Heart left ventricle (tissue), 16 donors: ENCODE measurements at regions of chr22 and their contacts with region 1.

Region 1: DNA sequence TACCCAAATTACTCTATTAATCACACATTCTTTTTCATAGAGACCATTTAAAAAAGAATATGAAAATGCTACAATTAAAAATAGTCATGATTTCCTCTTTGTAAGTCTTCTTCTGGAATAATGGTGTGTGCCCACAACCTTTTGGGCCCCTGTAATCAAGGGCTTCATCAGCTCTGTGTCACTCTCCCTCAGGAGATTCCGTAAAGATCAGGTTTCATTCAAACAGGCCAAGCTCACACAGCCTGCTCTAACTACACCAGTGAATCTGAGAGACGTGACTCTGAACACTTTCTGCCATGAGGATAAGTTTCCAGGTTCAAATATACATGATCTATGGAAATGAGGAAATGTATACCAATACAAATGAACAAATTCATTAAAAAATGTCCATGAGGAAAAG is 9.5 kb downstream of the DRICH1 start:
- DNase-seq: no peak
- ATAC-seq: no peak
- H3K4me3 ChIP-seq: no peak overlapping the region
- H3K27ac ChIP-seq: no peak overlapping the region
- H3K4me1 ChIP-seq: no peaks in the 10 kb centered on the region
- H3K27me3 ChIP-seq: no peaks in the 10 kb centered on the region
- CTCF ChIP-seq: no peak
- POLR2A ChIP-seq: no peak

Region 2: GRCh38 chr22:23685205-23685784 is 62.7 kb after region 1 on chr22:
- intact Hi-C with region 1: loop called in 1 of 10 experiments (anchors 10 kb)
- DNase-seq: peak in 1 of 5 donors; percentile 44
- ATAC-seq: peak in 3 of 4 donors; percentile 64 to 71 (median 66)
- H3K4me3 ChIP-seq: no peak overlapping the region
- H3K27ac ChIP-seq: peak overlapping the region in 1 of 12 donors; percentile 69
- H3K4me1 ChIP-seq: peaks cover 0 to 33% (median 21%) of the 10 kb centered on the region in 12 donors
- H3K27me3 ChIP-seq: no peaks in the 10 kb centered on the region
- CTCF ChIP-seq: no peak
- POLR2A ChIP-seq: no peak

Region 3: GRCh38 chr22:23767673-23768548 is 145.3 kb after region 1 on chr22 and contains the start of gene CHCHD10:
- intact Hi-C with region 1: loop called in 4 of 10 experiments (anchors 5 to 10 kb)
- DNase-seq: peak; percentile 88 to 92 (median 90)
- ATAC-seq: peak; percentile 73 to 87 (median 82)
- H3K4me3 ChIP-seq: peak within 1 kb of the TSS; percentile 30 to 91 (median 66)
- H3K27ac ChIP-seq: peak within 1 kb of the TSS; percentile 82 to 97 (median 90)
- H3K4me1 ChIP-seq: peaks cover 0 to 70% (median 43%) of the 10 kb centered on the region in 12 donors
- H3K27me3 ChIP-seq: no peaks in the 10 kb centered on the region
- CTCF ChIP-seq: peak; percentile 73 to 92 (median 86)
- POLR2A ChIP-seq: peak; percentile 92 to 97
- total RNA-seq, gene CHCHD10: 374 to 1,458 (median 944) TPM

Region 4: DNA sequence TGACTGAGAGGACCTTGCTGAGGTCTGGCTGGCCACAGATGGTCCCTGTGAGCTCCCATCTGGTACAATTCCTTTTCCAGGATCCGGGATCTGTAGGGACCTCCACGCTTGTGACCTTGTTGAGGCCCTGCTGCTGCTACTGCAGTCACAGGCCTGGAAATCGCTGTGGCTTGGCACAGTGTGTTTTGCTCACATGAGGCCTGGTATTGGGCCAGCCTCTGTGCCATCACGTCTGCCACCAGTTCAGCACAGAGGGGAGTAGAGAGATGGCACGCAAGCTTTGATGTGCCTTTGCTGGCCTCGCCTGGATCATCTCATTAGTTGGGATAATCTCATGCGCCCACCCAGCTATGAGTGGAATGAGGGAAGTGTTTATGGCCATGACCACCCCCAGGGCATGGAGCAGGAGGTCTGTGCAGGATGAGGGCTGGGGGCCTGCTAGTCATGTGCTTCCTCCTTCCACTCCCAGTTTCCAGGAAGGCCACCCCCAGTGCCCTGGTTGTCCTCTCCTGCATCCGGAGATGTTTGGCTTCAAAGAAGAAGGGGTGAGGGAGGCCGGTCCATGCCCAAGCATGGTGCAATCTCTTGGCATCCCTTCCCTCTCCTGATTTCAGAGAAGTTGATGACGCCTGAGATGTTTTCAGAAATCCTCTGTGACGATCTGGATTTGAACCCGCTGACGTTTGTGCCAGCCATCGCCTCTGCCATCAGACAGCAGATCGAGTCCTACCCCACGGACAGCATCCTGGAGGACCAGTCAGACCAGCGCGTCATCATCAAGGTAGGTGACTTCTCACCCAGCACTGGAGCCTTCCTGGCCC is 193.7 kb after region 1 on chr22:
- intact Hi-C with region 1: no loop called
- DNase-seq: peak in 4 of 5 donors; percentile 59 to 84 (median 72)
- ATAC-seq: peak; percentile 90 to 98 (median 92)
- H3K4me3 ChIP-seq: no peak overlapping the region
- H3K27ac ChIP-seq: peak overlapping the region; percentile 43 to 93 (median 78)
- H3K4me1 ChIP-seq: peaks cover 0 to 24% (median 8%) of the 10 kb centered on the region in 12 donors
- H3K27me3 ChIP-seq: no peaks in the 10 kb centered on the region
- CTCF ChIP-seq: no peak
- POLR2A ChIP-seq: no peak

Region 5: DNA sequence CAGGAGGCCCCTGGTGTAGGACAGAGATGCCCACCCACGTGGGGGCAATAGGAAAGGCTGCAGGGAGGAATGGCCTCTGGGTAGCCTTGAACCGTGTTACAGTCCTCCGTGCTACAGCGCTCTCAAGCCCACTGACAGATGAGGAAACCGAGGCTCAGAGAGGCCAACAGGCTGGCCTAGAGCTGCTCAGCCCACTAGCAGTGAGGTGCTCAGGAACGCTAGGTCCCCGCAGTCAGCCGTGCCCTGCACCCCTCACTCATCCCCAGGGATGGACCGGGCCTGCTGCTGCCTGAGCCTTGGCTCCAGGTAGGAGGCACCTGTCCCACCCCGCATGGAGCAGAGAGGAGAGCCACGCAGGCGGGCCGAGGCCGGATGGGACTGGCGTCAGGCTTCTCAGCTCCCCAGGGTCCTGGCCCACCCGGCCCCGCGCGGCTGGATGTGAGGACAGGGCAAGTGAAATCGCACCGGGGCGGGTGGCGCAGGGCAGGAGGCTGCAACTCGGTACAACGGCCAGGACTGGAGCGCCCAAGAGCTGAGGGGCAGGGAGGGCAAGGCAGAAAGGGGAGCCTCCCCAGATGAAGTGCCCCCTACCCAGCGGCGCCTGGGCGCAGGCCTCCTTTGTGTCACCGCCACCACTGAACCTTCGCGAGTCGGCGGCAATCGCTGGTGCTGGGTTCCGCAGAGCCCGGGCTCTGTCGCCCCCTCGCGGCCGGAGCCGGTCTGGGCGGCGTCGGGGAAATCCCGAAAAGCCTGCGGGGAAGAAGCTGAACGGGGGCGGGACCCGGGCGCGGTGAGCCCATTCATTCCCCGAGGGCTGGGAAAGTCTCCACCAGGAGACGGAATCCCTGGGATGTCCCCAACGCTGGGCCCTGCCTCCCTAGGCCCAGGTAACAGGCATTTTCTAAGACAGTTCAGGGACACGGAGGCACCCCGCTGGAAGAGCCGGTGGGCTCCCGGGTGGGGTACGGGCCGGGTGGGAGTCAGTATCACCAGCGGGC is 226.7 kb after region 1 on chr22:
- intact Hi-C with region 1: loop called in 5 of 10 experiments (anchors 5 to 10 kb)
- DNase-seq: peak; percentile 81 to 94 (median 85)
- ATAC-seq: peak; percentile 11 to 65 (median 56)
- H3K4me3 ChIP-seq: peak overlapping the region in 4 of 12 donors; percentile 5 to 27 (median 24)
- H3K27ac ChIP-seq: no peak overlapping the region
- H3K4me1 ChIP-seq: peaks cover 3 to 51% (median 31%) of the 10 kb centered on the region in 12 donors
- H3K27me3 ChIP-seq: no peaks in the 10 kb centered on the region
- CTCF ChIP-seq: peak; percentile 95 to 99 (median 98)
- POLR2A ChIP-seq: no peak